ENCODE measurements at regions of chr1 and their contacts with region 1.

Region 1: DNA sequence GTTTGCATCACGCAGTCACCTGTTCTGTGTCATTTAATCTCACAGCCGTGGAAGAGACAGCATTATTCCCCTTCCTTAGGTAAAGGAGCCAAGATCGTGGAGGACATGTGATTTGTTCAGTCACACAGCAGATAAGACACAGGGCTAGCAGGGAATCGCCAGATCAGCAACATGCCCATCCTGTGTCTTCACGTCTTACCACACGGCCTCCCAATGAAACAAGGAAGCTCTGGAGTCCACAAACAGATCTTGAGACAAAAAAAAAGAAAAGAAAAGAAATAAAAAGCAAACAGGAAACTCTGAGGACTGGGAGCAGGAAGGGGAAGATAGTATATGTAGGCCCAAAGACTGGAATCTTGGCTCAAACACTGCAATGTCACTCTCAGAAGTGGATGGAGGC is 155.3 kb downstream of the ADSS2 start:
- DNase-seq: no peak
- ATAC-seq: no peak
- H3K4me3 ChIP-seq: no peak overlapping the region
- H3K27ac ChIP-seq: no peak overlapping the region
- H3K4me1 ChIP-seq: no peaks in the 10 kb centered on the region
- H3K27me3 ChIP-seq: no peaks in the 10 kb centered on the region
- CTCF ChIP-seq: no peak
- POLR2A ChIP-seq: no peak
- RAD21 ChIP-seq: no peak

Region 2: GRCh38 chr1:243482141-243483022 is 814.1 kb before region 1 on chr1:
- CTCF ChIA-PET with region 1: no interaction called
- POLR2A ChIA-PET with region 1: no interaction called
- dilution Hi-C with region 1: no loop called
- in situ Hi-C with region 1: loop called (anchors 25 kb)
- intact Hi-C with region 1: no loop called
- DNase-seq: peak; percentile 49
- ATAC-seq: peak; percentile 79
- H3K4me3 ChIP-seq: no peak overlapping the region
- H3K27ac ChIP-seq: no peak overlapping the region
- H3K4me1 ChIP-seq: peaks cover 2% of the 10 kb centered on the region; the same call in 1 of the 2 replicates
- H3K27me3 ChIP-seq: no peaks in the 10 kb centered on the region
- CTCF ChIP-seq: no peak
- POLR2A ChIP-seq: no peak
- RAD21 ChIP-seq: no peak

Region 3: DNA sequence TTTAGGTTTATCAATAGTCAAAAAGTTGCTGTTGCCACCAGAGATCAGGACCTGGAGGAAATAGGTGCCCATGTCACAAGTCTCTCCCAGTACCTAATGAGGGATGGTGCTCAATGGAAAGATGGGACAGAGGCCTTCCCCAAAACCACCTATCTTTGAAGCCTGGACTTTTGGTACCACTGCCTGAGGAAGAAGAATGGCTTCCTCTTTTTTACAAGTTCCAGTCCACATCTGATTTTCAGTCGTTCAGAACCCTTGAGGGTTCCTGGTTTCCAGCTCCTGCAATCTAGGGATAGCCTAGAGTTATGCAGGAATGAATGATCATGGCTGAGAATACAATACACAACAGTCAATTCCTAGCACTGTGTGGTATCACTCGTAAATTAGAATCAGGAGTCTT is 170.3 kb after region 1 on chr1:
- CTCF ChIA-PET with region 1: no interaction called
- POLR2A ChIA-PET with region 1: no interaction called
- dilution Hi-C with region 1: no loop called
- in situ Hi-C with region 1: no loop called
- intact Hi-C with region 1: no loop called
- DNase-seq: no peak
- ATAC-seq: no peak
- H3K4me3 ChIP-seq: no peak overlapping the region
- H3K27ac ChIP-seq: no peak overlapping the region
- H3K4me1 ChIP-seq: no peaks in the 10 kb centered on the region
- H3K27me3 ChIP-seq: no peaks in the 10 kb centered on the region
- CTCF ChIP-seq: no peak
- POLR2A ChIP-seq: no peak
- RAD21 ChIP-seq: no peak